ENCODE measurements at regions of chr4 and their contacts with region 1.

Region 1: DNA sequence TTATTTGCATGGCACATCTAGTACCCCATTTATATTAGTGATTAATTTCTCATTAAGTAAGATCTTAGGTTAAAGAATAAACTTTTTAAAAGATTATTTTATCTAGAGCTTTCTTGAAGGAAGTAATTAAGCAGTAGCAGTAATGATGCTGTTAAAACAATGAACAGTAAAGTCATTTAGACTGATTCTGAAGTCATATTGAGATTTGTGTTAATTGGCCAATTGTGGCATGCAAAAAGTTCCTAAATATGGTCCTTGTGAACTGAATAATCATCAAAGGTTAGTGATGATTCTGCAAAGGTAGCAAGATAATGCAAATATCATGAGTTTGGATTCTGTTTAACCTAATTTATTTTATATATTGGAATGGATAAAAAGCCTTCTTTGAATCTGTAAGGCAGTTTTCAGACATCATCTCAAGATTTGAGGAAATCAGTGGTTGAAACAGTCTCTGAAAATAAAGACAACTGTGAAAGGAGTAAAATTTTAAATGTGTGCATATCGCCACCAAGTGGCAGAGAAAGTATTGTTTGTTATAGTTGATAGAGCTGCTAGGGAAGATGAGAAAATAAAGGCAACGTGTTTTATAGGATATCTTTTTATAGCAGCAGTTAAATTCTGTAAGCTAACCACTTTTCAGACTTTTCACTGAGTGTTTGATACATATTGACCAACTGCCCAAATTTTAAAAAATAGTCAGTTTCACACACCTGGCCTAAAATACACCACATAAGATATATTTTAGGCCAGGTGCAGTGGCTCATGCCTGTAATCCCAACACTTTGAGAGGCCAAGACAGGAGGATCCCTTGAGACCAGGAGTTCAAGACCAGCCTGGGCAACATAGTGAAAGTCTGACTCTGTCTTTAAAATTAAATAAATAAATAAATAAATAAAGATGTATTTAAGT is 79.6 kb downstream of the CCKAR start:
- DNase-seq: peak; percentile 42
- H3K4me3 ChIP-seq: no peak overlapping the region
- H3K27ac ChIP-seq: no peak overlapping the region
- H3K4me1 ChIP-seq: no peaks in the 10 kb centered on the region
- H3K27me3 ChIP-seq: no peaks in the 10 kb centered on the region
- CTCF ChIP-seq: peak; percentile 52 to 58

Region 2: DNA sequence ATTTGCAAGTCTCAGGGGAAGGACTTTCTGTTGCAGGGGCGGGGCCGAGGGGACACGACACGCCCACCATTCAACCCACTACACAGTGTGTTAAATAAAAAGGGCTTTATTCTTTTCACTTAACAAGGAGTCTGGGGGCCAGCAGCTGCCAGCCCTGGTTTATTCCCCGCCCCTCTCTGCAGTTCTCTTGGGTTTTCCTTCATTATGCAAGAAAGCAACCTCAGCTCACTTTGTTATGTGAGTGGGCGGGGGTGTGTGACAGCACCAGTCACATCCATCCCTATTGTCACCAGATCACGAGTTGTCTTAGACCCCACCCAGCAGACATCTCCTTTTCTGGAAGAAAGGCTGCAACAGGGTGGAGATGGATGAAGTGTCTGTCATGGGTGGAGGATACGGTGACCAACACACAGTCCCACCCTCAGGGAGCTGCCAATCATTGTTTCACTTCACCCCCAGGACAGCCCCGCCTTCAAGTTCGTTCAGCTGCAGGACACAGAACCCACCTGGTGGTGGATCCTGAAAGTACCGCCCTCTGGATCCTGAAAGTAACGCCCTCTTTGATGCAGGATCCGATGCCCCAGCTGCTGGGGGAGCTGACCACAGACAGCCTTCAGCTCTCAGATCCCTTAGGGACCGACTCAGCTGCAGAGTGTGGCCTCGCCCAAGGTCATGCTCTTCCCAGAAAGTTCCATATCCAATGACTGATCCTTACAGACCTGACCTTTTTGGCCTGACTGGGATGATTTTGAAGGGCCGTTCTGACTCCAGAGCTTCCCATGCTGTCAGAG is 417.0 kb before region 1 on chr4:
- CTCF ChIA-PET with region 1: no interaction called
- dilution Hi-C with region 1: no loop called
- in situ Hi-C with region 1: loop called (anchors 10 to 25 kb)
- intact Hi-C with region 1: loop called (anchors 1 kb)
- DNase-seq: no peak
- H3K4me3 ChIP-seq: no peak overlapping the region
- H3K27ac ChIP-seq: no peak overlapping the region
- H3K4me1 ChIP-seq: no peaks in the 10 kb centered on the region
- H3K27me3 ChIP-seq: no peaks in the 10 kb centered on the region
- CTCF ChIP-seq: no peak

Region 3: DNA sequence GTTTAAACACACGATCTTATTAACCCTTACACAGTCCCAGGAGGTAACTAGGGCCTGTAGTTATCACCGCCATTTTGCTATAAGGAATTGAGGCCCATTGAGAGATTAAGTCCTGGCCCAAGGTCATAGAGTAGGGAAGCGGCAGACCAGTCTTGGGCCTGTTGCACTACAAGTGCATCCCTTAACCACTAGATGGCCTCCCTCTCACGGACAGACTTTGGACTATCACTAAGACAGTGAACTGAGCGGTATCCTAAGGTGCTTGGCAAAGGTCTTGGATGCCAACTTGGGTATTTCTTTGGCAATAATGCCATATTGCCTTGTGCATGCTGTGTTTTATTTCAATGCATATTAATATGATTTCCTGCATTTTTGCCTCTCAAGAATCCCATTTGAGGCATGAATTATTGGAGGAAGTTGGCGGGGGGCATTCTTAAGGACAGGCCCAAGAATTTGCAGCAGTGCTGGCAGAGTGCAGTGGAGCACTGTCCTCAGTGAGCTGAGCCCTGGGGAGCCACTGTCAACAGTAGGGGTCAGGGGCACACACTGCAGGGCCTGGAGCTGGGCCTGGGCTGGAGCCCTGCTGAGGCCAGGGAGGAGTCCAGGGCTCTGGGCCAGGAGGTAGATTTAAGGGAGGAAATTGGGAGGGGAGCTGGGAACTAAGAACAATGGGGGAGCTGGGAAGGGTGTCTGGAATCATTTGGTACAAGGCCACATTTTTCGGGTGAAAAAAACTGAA is 349.2 kb before region 1 on chr4:
- CTCF ChIA-PET with region 1: no interaction called
- dilution Hi-C with region 1: no loop called
- in situ Hi-C with region 1: no loop called
- intact Hi-C with region 1: loop called (anchors 2 kb)
- DNase-seq: peak; percentile 32
- H3K4me3 ChIP-seq: no peak overlapping the region
- H3K27ac ChIP-seq: no peak overlapping the region
- H3K4me1 ChIP-seq: peaks cover 4% of the 10 kb centered on the region
- H3K27me3 ChIP-seq: peaks cover 6% of the 10 kb centered on the region
- CTCF ChIP-seq: peak; percentile 49 to 64

Region 4: DNA sequence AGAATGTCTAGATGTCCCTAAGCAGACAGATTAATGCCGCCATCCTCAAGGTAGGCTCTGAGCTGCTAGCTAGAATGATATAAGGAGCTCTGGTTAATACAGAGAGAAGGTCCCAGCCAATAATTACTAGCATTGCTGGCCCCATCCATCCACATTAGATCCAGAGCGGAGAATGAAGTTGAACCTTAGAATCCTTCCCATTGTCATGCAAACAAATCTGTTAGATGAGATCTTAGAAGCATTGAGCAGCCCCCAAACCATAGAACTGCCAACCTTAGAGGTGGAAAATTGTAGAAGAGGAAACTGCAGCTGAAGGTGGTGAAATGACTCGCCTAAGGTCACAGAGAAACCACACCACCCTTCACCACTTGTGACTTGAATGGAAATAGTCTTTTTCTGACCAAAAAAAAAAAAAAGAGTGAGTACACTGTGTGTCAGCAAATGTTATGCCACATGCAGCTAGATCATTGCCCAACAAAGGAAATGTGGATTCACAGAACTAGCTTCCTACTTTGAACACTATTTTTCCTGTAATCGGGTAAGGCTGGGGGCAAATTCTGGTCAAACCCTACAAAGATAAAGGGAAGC is 334.5 kb before region 1 on chr4:
- CTCF ChIA-PET with region 1: no interaction called
- dilution Hi-C with region 1: no loop called
- in situ Hi-C with region 1: loop called in 1 of 2 experiments (anchors 5 kb)
- intact Hi-C with region 1: no loop called
- DNase-seq: peak; percentile 62
- H3K4me3 ChIP-seq: no peak overlapping the region
- H3K27ac ChIP-seq: no peak overlapping the region
- H3K4me1 ChIP-seq: no peaks in the 10 kb centered on the region
- H3K27me3 ChIP-seq: peaks cover 2% of the 10 kb centered on the region
- CTCF ChIP-seq: no peak

Region 5: DNA sequence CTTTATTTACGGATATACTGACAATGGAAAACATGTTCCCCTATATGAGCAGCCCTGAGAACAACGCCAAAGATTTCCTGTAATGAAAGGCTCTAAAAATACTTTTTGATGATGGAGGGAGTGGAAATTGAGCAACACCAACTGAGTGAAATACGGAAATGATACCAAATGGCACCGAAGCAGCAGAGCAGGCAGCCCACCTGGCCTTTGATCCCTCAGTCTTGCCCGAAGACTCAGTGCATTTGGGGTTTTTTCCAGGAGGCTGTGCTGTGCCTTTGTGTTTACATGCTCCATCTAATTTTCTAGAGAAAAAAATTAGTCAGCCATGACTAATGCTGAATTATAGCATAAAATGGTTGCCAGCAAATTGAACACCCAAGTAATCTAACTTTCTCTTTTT is 259.7 kb before region 1 on chr4:
- CTCF ChIA-PET with region 1: no interaction called
- dilution Hi-C with region 1: no loop called
- in situ Hi-C with region 1: no loop called
- intact Hi-C with region 1: loop called (anchors 10 kb)
- DNase-seq: peak; percentile 5
- H3K4me3 ChIP-seq: no peak overlapping the region
- H3K27ac ChIP-seq: no peak overlapping the region
- H3K4me1 ChIP-seq: no peaks in the 10 kb centered on the region
- H3K27me3 ChIP-seq: peaks cover 4% of the 10 kb centered on the region
- CTCF ChIP-seq: peak in 1 of 2 donors; percentile 17

Region 6: DNA sequence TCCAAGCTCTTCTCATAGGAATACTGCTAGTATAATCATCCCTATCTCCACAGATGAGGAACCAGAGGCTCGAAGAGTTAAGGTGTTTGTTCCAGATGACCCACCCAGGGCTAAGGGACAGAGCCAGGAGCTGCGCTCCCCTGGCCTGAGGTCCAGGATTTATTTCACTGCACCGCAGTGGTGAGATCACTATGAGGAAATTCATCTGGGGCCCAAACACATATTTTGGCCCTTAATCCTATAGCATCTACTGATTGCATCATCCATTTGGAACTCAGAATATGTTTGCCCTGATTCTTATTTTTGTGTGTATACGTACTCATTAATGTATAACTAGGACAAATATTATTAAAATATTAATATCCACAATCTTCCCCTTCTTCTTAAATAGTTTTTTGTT is 189.9 kb before region 1 on chr4:
- CTCF ChIA-PET with region 1: no interaction called
- dilution Hi-C with region 1: no loop called
- in situ Hi-C with region 1: no loop called
- intact Hi-C with region 1: no loop called
- DNase-seq: no peak
- H3K4me3 ChIP-seq: no peak overlapping the region
- H3K27ac ChIP-seq: no peak overlapping the region
- H3K4me1 ChIP-seq: no peaks in the 10 kb centered on the region
- H3K27me3 ChIP-seq: peaks cover 4% of the 10 kb centered on the region
- CTCF ChIP-seq: no peak

Region 7: DNA sequence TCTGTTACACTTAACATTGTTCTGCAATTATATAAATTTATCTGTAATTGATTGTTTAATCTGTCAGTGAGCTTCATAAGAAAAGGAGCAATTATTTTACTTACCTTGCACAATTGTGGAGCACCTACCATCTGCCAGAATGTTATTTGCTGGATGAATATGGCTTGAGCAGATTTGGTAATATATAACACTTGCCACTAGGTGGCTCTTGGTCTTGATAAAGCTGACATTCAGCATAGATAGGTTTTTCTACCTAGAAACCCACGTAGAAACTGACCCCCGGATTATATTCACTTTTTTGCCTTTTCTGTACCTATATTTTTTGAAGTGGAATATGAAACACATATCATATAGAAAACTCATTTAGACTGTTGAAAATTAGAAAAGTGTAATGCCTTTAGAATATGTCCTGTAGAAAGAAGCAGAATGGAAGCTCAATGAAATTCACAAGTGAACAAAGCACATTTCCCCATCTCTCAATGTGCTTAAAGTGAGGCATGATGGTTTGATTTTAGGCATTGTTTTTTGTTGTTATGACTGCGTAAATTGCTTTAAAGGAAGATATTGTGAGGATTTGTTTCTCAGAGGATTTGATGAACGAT is 80.4 kb before region 1 on chr4:
- CTCF ChIA-PET with region 1: interaction called, 10 read pairs
- dilution Hi-C with region 1: no loop called
- in situ Hi-C with region 1: loop called in 1 of 2 experiments (anchors 10 kb)
- intact Hi-C with region 1: loop called (anchors 1 kb)
- DNase-seq: peak; percentile 34
- H3K4me3 ChIP-seq: no peak overlapping the region
- H3K27ac ChIP-seq: no peak overlapping the region
- H3K4me1 ChIP-seq: peaks cover 14% of the 10 kb centered on the region
- H3K27me3 ChIP-seq: no peaks in the 10 kb centered on the region
- CTCF ChIP-seq: peak; percentile 55 to 64